A549 (cell line): ENCODE measurements at regions of chr19 and their contacts with region 1.

Region 1: GRCh38 chr19:54029930-54030490 is 33.7 kb downstream of the VSTM1 start:
- DNase-seq: peak; percentile 70 to 88
- ATAC-seq: peak; percentile 87
- H3K4me3 ChIP-seq: no peak overlapping the region
- H3K27ac ChIP-seq: peak overlapping the region in 1 of 2 experiments; percentile 32; a peak in 2 of 6 replicates
- H3K4me1 ChIP-seq: no peaks in the 10 kb centered on the region
- CTCF ChIP-seq: peak; percentile 91
- EP300 ChIP-seq: no peak
- POLR2A ChIP-seq: no peak
- RAD21 ChIP-seq: peak; percentile 90 to 92

Region 2: GRCh38 chr19:53808710-53809125 is 221.3 kb before region 1 on chr19:
- CTCF ChIA-PET with region 1: interaction called, 148 read pairs
- POLR2A ChIA-PET with region 1: no interaction called
- DNase-seq: peak; percentile 52 to 85
- ATAC-seq: peak; percentile 87 to 91
- H3K4me3 ChIP-seq: no peak overlapping the region
- H3K27ac ChIP-seq: no peak overlapping the region
- H3K4me1 ChIP-seq: no peaks in the 10 kb centered on the region
- CTCF ChIP-seq: peak; percentile 86
- EP300 ChIP-seq: no peak
- POLR2A ChIP-seq: no peak
- RAD21 ChIP-seq: peak; percentile 88 to 98

Region 3: DNA sequence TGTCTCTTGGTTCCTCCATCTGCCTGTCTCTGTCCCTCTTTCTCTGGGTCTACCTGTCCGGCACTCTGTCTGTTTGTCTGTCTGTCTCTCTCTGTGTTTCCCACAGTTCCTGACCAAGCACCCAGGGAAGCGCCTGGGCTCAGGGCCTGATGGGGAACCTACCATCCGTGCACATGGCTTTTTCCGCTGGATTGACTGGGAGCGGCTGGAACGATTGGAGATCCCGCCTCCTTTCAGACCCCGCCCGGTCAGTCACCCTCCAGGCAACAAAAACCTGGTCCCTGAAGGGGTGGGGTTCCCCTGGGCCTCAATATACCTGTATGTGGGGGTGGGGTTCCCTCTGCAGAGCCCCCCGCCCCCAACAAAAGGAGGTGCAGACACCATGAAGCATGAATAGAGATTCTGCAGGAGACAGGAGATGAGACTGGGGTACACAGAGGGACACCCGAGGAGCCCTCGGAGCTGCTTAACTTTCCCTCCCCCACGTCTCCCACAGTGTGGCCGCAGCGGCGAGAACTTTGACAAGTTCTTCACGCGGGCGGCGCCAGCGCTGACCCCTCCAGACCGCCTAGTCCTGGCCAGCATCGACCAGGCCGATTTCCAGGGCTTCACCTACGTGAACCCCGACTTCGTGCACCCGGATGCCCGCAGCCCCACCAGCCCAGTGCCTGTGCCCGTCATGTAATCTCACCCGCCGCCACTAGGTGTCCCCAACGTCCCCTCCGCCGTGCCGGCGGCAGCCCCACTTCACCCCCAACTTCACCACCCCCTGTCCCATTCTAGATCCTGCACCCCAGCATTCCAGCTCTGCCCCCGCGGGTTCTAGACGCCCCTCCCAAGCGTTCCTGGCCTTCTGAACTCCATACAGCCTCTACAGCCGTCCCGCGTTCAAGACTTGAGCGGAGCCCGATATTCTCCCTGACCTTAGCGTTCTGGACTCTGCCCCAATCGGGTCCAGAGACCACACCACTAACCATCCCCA is 123.5 kb before region 1 on chr19:
- CTCF ChIA-PET with region 1: interaction called, 63 read pairs
- POLR2A ChIA-PET with region 1: no interaction called
- DNase-seq: peak in 1 of 2 experiments; percentile 92
- ATAC-seq: peak; percentile 57 to 65
- H3K4me3 ChIP-seq: peak overlapping the region; percentile 19; the same call in 1 of the 3 replicates
- H3K27ac ChIP-seq: peak overlapping the region; percentile 9 to 82; a peak in 4 of 6 replicates
- H3K4me1 ChIP-seq: peaks cover 42% of the 10 kb centered on the region
- CTCF ChIP-seq: peak; percentile 88
- EP300 ChIP-seq: no peak
- POLR2A ChIP-seq: no peak
- RAD21 ChIP-seq: peak; percentile 85 to 91

Region 4: DNA sequence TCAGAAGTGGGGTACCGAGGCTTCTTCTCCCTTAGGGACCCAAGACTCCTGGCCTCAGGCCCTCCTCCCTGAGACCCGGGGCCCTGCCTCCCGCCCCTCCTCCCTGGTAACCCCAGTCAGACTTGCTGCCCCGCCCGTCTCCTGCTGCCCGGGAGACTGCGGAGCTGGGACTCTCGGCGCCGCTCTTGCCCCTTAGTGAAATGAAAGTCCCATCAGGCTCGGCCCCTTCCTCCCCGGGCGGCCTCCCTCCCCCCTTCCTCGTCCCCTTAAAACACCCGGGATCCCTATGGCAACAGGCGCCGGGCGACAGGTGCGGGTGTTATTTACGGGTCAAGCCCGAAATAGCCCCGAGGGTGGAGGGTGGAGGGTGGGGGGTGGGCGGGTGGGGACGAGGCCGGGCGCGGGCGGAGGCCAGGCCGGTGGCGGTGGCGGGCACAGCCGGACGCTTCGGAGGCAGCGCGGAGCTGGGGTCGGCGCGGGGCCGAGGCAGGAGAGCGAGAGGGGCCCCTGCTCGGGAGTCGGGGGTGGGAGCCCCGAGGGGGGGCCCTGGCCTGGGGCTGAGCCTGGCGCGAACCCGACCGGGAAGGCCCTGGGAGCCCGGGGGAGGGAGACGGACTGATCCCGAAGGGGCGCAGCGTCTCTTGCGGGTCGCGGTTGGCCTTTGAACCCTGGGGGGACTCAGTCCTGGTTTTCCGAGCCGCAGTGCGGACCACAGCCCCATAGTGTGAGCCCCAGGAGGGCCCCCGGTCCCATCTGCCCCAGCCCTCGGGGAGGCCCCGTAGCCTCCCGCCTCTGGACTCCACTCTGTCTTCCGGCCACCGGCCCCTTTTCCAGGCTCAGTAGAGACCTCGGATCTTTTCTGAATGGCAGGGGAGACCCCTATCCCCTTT is 38.5 kb before region 1 on chr19 and contains the start of gene CACNG6:
- CTCF ChIA-PET with region 1: interaction called, 45 read pairs
- POLR2A ChIA-PET with region 1: interaction called, 3 read pairs
- DNase-seq: peak; percentile 86 to 93
- ATAC-seq: peak; percentile 53 to 62
- H3K4me3 ChIP-seq: peak within 1 kb of the TSS; percentile 51
- H3K27ac ChIP-seq: peak within 1 kb of the TSS; percentile 93 to 97
- H3K4me1 ChIP-seq: peaks cover 66% of the 10 kb centered on the region
- CTCF ChIP-seq: no peak
- EP300 ChIP-seq: no peak
- POLR2A ChIP-seq: peak; percentile 20; the same call in 1 of the 2 replicates
- RAD21 ChIP-seq: peak; percentile 36 to 47; a peak in 4 of 5 replicates
- polyA plus RNA-seq, gene CACNG6: 15.6 and 16.2 TPM in 2 replicates